ENCODE measurements at regions of chr3 and their contacts with region 1.

Region 1: GRCh38 chr3:55485211-55485791 is 1.8 kb downstream of the WNT5A start:
- DNase-seq: peak; percentile 77 to 90
- ATAC-seq: peak; percentile 81
- H3K4me3 ChIP-seq: no peak overlapping the region
- H3K27ac ChIP-seq: no peak overlapping the region
- H3K4me1 ChIP-seq: no peaks in the 10 kb centered on the region
- H3K27me3 ChIP-seq: peaks cover 0 to 1% of the 10 kb centered on the region in 2 donors

Region 2: DNA sequence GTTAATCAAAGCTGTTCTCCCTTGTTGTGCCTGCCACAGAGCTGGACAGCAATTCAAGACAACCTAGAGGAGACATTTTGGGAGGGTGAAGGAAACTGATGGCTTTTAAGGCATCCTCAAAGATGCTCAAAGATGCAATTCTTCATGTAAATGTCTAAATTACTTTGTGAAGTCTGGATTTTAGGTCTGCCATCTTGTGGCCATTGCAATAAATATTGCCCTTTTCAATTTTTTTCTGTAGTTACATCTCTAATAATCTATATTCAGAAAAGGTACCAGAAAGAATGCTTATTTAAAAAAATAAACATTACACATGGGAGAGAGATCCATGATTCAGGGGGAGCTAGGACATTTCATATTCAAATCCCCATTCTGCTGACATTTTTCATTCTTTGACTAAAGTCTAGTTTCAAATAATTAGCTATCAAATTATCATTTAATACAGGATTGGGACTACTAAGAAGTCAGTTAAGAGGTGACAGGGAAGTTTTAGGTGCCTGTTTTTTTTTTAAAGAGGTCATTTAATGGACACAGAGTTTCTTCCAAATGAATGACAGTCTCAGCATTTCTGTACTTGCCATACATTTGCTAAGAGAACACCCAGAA is 261.6 kb after region 1 on chr3:
- intact Hi-C with region 1: loop called in 1 of 2 experiments (anchors 2 kb)
- DNase-seq: no peak
- ATAC-seq: no peak
- H3K4me3 ChIP-seq: no peak overlapping the region
- H3K27ac ChIP-seq: no peak overlapping the region
- H3K4me1 ChIP-seq: no peaks in the 10 kb centered on the region
- H3K27me3 ChIP-seq: no peaks in the 10 kb centered on the region

Region 3: GRCh38 chr3:56251343-56251945 is 766.1 kb after region 1 on chr3:
- intact Hi-C with region 1: loop called (anchors 2 kb)
- DNase-seq: no peak
- ATAC-seq: no peak
- H3K4me3 ChIP-seq: no peak overlapping the region
- H3K27ac ChIP-seq: no peak overlapping the region
- H3K4me1 ChIP-seq: no peaks in the 10 kb centered on the region
- H3K27me3 ChIP-seq: no peaks in the 10 kb centered on the region

Region 4: GRCh38 chr3:56494686-56495322 is 1009.5 kb after region 1 on chr3:
- intact Hi-C with region 1: loop called in 1 of 2 experiments (anchors 10 kb)
- DNase-seq: peak; percentile 78 to 83
- ATAC-seq: peak; percentile 79
- H3K4me3 ChIP-seq: no peak overlapping the region
- H3K27ac ChIP-seq: no peak overlapping the region
- H3K4me1 ChIP-seq: no peaks in the 10 kb centered on the region
- H3K27me3 ChIP-seq: no peaks in the 10 kb centered on the region